ENCODE measurements at regions of chrX and their contacts with region 1.

Region 1: GRCh38 chrX:110167952-110168451 is 149.9 kb downstream of the AMMECR1 start:
- H3K4me3 ChIP-seq: no peak overlapping the region
- H3K27ac ChIP-seq: no peak overlapping the region
- H3K4me1 ChIP-seq: no peaks in the 10 kb centered on the region
- CTCF ChIP-seq: peak; percentile 60

Region 2: DNA sequence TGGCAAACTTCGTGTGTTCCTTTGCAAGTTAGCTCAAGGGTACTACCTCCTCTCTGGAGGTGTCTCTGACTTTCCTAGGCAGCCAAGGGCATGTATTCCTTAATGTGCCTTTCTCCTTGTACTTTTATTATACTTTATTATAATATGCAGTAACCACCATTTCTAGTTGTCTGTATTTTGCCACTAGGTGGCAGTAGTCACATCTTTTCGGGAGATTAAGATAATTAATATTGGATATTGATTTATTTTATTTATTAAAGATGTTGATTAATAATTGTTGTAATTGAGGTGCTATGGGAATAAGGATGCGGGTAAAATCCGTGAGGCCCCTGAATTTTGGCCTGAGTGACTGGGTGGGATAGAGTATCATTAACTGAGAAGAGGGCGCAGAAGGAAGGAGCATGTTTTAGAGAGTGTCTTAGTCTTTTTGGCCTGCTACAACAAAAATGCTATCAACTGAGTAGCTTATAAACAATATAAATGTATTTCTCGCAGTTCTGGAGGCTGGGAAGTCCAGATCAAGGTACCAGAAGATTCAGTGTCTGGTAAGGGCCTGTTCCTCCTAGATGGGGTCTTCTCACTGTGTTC is 11.7 kb before region 1 on chrX:
- CTCF ChIA-PET with region 1: interaction called, 48 read pairs
- POLR2A ChIA-PET with region 1: no interaction called
- H3K4me3 ChIP-seq: no peak overlapping the region
- H3K27ac ChIP-seq: no peak overlapping the region
- H3K4me1 ChIP-seq: no peaks in the 10 kb centered on the region
- CTCF ChIP-seq: no peak

Region 3: GRCh38 chrX:110182362-110182761 is 14.4 kb after region 1 on chrX:
- CTCF ChIA-PET with region 1: interaction called, 23 read pairs
- POLR2A ChIA-PET with region 1: no interaction called
- H3K4me3 ChIP-seq: no peak overlapping the region
- H3K27ac ChIP-seq: no peak overlapping the region
- H3K4me1 ChIP-seq: 0 out of 2 replicates have a peak, but pooled peaks cover 4% of the 10 kb centered on the region
- CTCF ChIP-seq: no peak